Transverse colon (tissue), 4 donors: ENCODE measurements at regions of chr12 and their contacts with region 1.

Region 1: DNA sequence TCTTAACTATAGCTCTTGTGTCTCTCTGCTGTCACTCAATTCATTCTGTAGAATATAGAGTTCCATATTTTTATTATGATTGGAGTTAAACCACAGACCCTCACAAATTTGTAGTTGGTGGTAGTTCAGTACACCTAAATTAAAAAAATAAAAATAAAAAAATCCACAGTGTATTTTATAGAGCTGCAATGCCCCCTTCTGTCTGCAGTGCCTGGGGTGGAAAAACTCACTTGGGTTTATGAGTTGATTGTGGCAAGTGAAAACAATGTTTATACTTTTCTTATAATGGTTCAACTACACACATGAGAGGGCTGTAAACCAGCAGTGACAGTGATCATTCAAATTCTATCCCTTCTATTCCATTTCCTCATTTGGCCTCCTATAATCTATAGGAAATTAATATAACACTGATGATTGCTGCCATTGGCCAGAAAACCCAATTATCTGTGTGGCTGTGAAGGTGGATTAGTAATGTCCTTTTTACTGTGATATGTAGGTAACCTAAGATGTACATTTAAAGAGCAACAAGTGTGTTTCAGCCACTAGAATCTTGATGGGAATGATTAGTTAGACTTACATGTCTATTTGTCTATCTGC is 166.9 kb upstream of the LRIG3 start:
- DNase-seq: peak; percentile 15
- H3K4me3 ChIP-seq: no peak overlapping the region
- H3K27ac ChIP-seq: no peak overlapping the region
- H3K4me1 ChIP-seq: peaks cover 0 to 41% (median 17%) of the 10 kb centered on the region in 4 donors
- H3K27me3 ChIP-seq: no peaks in the 10 kb centered on the region
- CTCF ChIP-seq: peak; percentile 43 to 67 (median 52)
- EP300 ChIP-seq: no peak
- POLR2A ChIP-seq: no peak

Region 2: DNA sequence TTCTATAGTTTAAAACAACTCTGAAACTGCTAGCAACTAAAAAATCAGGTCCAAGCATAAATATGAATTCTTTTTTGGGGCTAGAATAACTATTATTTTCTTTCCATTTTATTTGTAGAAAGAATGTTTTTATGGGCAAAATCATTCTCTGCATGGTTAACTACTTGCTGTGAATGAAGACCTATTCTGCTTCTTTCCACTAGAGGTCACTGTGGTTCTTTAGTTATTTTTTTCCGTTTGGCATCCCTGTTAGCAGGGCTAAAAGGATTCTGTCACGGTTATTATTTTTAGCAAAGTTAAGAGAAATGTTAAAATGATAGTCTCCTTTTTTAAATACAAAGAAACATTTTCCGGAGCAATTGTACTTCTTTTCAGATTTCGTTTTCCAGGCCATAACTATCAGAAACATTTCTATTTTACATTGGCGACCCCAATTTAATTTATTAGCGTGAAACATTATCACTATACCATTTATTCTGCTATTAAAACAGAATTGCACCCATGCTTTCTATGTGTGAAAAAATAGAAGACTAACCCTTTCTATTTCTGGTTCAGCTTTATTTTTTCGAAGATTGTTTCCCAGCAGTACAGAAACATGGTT is 741.0 kb before region 1 on chr12:
- in situ Hi-C with region 1: loop called in 1 of 4 experiments (anchors 25 kb)
- intact Hi-C with region 1: loop called (anchors 10 kb)
- DNase-seq: no peak
- H3K4me3 ChIP-seq: no peak overlapping the region
- H3K27ac ChIP-seq: no peak overlapping the region
- H3K4me1 ChIP-seq: peaks cover 0 to 11% (median 5%) of the 10 kb centered on the region in 4 donors
- H3K27me3 ChIP-seq: no peaks in the 10 kb centered on the region
- CTCF ChIP-seq: peak; percentile 68 to 89 (median 77)
- EP300 ChIP-seq: no peak
- POLR2A ChIP-seq: no peak

Region 3: DNA sequence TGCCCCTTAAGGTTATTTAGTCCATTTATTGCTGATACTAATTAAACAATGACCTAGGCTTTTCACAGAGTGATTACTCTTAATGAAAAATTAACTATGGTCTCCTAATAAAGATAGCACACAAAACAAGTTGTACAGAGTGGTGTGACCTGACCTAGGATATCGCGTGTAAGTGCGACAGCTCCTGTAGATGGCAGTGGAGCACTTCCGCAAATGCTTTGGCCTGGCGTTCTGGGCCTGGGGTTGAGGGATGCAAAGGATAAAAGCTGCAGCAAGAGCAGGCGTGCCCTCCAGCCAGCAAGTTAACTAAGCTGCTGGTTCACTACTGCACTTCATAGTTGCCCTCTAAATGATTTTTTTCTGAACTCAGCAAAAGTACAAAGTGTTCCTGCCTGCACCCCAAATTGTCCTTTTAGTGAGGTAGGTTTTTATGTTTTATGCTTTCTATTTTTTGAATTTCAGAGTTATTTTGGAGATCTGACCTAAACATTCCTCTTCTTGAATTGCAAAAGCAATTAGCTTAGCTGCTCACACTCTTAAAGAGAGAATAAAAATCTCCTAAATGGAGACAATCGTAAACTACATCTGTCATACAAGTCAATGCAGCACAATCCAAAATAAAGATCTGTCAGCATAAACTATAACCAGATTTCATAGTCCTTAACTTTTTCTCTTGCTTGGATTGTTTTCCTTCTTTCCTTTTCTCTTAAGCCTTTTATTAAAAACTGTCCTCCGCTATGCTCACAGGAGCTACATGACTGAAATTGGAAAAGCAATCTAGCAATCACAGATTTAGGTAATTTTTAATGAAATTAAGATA is 546.5 kb before region 1 on chr12:
- in situ Hi-C with region 1: loop called in 2 of 4 experiments (anchors 25 kb)
- intact Hi-C with region 1: no loop called
- DNase-seq: peak; percentile 61
- H3K4me3 ChIP-seq: no peak overlapping the region
- H3K27ac ChIP-seq: peak overlapping the region in 1 of 4 donors; percentile 4
- H3K4me1 ChIP-seq: peaks cover 0 to 4% (median 0%) of the 10 kb centered on the region in 4 donors
- H3K27me3 ChIP-seq: no peaks in the 10 kb centered on the region
- CTCF ChIP-seq: peak; percentile 57 to 64 (median 60)
- EP300 ChIP-seq: no peak
- POLR2A ChIP-seq: no peak

Region 4: GRCh38 chr12:58888131-58888783 is 198.9 kb before region 1 on chr12:
- in situ Hi-C with region 1: loop called in 1 of 4 experiments (anchors 25 kb)
- intact Hi-C with region 1: no loop called
- DNase-seq: no peak
- H3K4me3 ChIP-seq: no peak overlapping the region
- H3K27ac ChIP-seq: peak overlapping the region in 1 of 4 donors; percentile 2
- H3K4me1 ChIP-seq: peaks cover 0 to 3% (median 0%) of the 10 kb centered on the region in 4 donors
- H3K27me3 ChIP-seq: no peaks in the 10 kb centered on the region
- CTCF ChIP-seq: no peak
- EP300 ChIP-seq: no peak
- POLR2A ChIP-seq: no peak

Region 5: GRCh38 chr12:58920102-58920960 is 166.8 kb before region 1 on chr12 and contains the start of gene LRIG3:
- in situ Hi-C with region 1: loop called in 1 of 4 experiments (anchors 25 kb)
- intact Hi-C with region 1: no loop called
- DNase-seq: peak; percentile 88
- H3K4me3 ChIP-seq: peak within 1 kb of the TSS; percentile 81 to 93 (median 88)
- H3K27ac ChIP-seq: peak within 1 kb of the TSS; percentile 96 to 99 (median 96)
- H3K4me1 ChIP-seq: peaks cover 0 to 59% (median 26%) of the 10 kb centered on the region in 4 donors
- H3K27me3 ChIP-seq: peaks cover 5% of the 10 kb centered on the region
- CTCF ChIP-seq: peak; percentile 12 to 58 (median 25)
- EP300 ChIP-seq: no peak
- POLR2A ChIP-seq: peak; percentile 71
- total RNA-seq, gene LRIG3: 43.0 to 115 (median 107) TPM